HEK293 (cell line): ENCODE measurements at regions of chr2 and their contacts with region 1.

Region 1: GRCh38 chr2:97697252-97698235 is 15.8 kb upstream of the ZAP70 start:
- H3K4me3 ChIP-seq: no peak overlapping the region
- H3K27ac ChIP-seq: no peak overlapping the region
- H3K4me1 ChIP-seq: no peaks in the 10 kb centered on the region
- CTCF ChIP-seq: peak; percentile 67

Region 2: DNA sequence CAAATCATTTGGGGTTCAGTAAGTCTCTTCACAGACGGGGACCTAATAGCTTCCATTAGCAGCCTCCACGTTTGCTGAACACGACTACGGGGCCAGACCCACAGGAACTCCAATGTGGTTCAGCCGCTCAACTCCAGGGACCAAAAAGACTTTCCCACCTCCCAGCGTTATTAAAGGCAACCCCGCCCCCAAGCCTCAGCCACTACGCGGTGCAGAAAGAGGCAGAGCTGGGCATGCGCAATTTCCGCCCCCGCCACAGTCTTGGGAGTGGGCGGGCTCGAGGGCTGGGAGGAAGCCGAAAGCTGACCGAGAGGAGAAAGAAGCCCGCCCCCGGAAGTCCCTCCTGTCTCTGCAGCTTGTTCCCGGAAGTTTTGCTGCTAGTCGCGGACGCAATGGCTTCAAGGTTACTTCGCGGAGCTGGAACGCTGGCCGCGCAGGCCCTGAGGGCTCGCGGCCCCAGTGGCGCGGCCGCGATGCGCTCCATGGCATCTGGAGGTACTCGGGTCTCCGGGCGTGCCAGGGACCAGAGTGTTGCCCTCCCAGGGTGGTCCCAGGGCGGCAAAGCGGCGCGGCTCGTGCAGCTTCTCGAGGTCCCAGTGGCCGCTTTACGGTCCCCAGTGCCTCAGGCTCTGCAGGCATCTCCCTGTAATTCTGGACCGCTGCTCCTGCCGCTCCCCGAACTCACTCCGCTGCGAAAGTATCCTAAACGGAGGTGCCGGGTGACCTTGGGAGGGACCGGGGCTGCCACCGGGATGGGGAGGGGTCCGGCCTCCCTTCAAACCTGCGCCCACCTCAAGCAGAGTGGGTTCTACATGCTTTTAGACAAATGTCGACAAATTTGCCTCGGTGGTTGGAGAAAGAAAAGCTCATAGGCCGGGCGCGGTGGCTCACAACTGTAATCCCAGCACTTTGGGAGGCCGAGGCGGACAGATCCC is 51.6 kb before region 1 on chr2 and contains the start of gene COX5B:
- CTCF ChIA-PET with region 1: interaction called, 14 read pairs
- POLR2A ChIA-PET with region 1: interaction called, 6 read pairs
- H3K4me3 ChIP-seq: peak within 1 kb of the TSS; percentile 94
- H3K27ac ChIP-seq: peak within 1 kb of the TSS; percentile 67; the same call in 1 of the 2 replicates
- H3K4me1 ChIP-seq: no peaks in the 10 kb centered on the region
- CTCF ChIP-seq: no peak

Region 3: DNA sequence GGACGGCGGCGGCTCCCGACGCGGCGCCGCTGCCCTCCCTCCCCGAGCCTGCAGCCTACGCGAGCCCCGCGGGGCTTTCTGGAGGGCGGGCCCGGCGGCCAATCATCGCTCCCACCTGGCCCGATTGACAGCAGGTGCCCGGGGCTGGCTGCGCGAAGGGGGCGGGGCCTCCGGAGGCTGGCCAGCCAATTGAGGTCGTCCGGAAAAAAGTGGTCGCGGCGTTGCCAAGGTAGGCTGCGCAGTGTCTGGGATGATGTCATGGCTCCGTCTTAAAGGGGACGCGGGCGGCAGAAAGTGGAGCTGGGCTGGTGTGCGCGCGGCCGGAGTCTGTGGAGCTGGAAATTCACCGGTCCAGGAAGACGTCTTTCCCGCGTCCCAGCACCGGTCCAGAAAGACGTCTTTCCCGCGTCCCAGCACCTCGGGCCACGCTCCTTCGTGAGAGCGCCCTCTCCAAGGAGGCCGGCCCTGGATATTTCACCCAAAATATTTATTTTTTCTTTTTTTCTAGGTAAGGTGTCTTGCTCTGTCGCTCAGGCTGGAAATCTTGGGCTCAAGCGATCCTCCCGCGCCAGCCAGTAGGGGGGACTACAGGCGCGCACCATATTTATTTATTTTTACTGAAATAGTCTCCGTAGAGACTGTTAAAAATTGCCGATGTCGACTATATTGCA is 33.4 kb before region 1 on chr2 and contains the start of gene ACTR1B:
- CTCF ChIA-PET with region 1: interaction called, 35 read pairs
- POLR2A ChIA-PET with region 1: interaction called, 3 read pairs
- H3K4me3 ChIP-seq: peak within 1 kb of the TSS; percentile 69
- H3K27ac ChIP-seq: peak within 1 kb of the TSS; percentile 95
- H3K4me1 ChIP-seq: 0 out of 2 replicates have a peak, but pooled peaks cover 2% of the 10 kb centered on the region
- CTCF ChIP-seq: no peak; the same call in none of the 2 replicates

Region 4: DNA sequence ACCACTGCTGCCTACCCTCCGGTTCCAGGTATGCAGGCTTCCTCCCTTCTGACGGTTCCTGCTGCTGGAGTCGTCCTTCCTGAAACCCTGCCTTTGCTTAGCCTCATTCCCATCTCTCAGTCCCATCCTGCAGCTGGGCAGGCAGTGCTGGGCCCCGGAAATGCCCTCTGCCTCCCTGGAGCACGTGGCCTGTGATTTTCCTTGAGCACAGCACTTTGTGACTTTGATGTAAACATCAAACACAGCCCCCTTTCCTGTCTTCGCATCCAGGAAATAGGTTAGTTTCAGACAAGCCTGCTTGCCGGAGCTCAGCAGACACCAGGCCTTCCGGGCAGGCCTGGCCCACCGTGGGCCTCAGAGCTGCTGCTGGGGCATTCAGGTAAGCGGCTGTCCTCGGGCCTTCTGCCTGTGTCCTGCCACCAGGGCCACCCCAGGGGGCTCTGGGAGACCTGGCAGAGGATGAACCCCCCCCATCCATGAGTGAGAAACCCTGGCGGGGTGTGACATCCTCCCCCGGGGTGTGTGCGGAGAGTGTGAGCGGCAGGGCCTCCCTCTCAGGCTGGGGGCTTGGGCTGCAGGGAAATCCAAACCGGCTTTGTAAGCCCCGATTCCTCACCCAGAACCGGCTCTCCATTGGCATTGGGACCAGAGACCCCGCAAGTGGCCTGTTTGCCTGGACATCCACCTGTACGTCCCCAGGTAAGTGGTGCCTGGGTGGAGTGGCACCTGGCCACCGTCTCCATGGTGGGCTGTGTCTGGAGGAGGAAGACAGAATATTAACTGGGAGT is 15.9 kb after region 1 on chr2 and contains the start of gene ZAP70:
- CTCF ChIA-PET with region 1: interaction called, 42 read pairs
- POLR2A ChIA-PET with region 1: interaction called, 3 read pairs
- H3K4me3 ChIP-seq: no peak within 1 kb of the TSS
- H3K27ac ChIP-seq: no peak within 1 kb of the TSS
- H3K4me1 ChIP-seq: no peaks in the 10 kb centered on the region
- CTCF ChIP-seq: no peak

Region 5: DNA sequence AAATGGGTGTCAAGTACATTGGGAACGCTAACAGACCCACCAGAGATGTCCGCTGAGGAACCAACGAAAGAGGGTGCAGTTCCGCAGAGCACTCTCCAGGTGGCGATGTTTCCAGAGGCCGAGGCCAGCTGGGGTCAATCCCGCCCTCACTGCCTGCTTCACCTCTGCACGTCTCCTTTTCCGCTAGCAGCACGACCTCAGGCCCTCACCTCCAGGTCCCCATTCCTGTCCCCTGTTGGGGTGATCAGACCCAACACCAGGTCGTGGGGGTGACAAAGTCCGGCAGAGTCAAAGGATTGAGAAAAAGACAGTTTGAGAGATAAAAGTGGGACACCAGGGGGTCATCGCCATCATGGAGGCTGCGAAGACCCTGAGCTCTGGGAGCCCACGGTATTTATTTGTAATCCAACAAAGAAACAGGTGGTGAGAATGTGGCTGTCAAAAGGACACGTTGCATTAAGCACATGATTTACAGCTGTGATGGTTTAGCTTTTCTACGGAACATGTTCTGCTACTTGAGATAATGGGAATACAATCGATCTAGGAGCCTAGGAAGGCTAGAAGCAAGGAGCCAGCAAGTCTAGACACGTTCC is 43.1 kb after region 1 on chr2:
- CTCF ChIA-PET with region 1: interaction called, 16 read pairs
- POLR2A ChIA-PET with region 1: no interaction called
- H3K4me3 ChIP-seq: no peak overlapping the region
- H3K27ac ChIP-seq: no peak overlapping the region
- H3K4me1 ChIP-seq: no peaks in the 10 kb centered on the region
- CTCF ChIP-seq: peak; percentile 65

Region 6: DNA sequence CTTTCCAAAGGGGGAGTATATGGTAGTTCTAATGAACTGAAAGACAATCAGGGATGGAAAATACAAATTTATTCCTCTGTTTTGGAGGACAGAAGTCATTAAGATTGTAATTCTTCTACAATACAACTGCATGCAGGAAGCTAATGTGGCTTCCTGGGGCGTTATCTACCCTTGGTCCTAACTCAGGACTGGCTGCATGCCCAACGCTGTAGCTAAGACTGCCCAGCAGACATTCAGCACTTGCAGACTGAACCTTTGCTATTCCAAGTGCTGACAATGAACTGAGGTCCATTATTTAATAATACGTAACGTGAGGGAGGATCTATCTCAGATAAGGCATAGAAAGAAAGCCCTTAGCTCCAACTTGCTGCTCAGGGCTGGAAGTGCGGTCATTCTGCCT is 69.0 kb after region 1 on chr2:
- CTCF ChIA-PET with region 1: no interaction called
- POLR2A ChIA-PET with region 1: no interaction called
- H3K4me3 ChIP-seq: no peak overlapping the region
- H3K27ac ChIP-seq: no peak overlapping the region
- H3K4me1 ChIP-seq: no peaks in the 10 kb centered on the region
- CTCF ChIP-seq: no peak

Region 7: DNA sequence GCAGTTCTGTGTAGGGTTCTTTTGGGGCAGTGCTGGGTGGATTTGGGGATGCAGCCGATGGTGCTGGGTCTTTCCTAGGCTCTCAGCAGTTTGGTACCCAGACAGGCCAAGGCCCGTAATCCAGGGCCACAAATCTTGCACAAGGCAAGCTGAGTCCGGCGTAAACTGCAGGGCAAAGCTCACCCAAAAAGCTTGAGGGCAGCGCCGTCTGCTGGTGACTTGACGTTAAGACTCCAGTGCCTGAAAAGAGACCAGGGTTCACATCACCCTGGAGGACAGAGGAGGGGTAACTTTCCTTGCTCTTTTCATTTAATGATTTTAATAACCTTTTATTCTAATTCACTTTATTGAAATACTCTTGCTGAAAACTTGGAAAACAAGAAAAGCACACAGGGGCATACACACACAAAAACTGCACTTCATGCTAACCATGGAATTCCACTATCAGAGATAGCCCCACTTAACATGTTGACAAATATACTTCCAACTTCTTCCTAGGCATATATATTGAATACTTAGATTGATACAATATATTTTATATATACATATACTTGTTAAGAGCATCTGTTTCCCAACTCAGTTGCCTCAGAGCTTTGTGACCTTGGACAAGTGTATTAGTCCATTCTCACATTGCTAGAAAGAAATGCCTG is 687.6 kb after region 1 on chr2:
- CTCF ChIA-PET with region 1: interaction called, 46 read pairs
- POLR2A ChIA-PET with region 1: no interaction called
- H3K4me3 ChIP-seq: no peak overlapping the region
- H3K27ac ChIP-seq: no peak overlapping the region
- H3K4me1 ChIP-seq: no peaks in the 10 kb centered on the region
- CTCF ChIP-seq: peak; percentile 86